B cell (primary cell): ENCODE measurements at regions of chr16 and their contacts with region 1.

Region 1: DNA sequence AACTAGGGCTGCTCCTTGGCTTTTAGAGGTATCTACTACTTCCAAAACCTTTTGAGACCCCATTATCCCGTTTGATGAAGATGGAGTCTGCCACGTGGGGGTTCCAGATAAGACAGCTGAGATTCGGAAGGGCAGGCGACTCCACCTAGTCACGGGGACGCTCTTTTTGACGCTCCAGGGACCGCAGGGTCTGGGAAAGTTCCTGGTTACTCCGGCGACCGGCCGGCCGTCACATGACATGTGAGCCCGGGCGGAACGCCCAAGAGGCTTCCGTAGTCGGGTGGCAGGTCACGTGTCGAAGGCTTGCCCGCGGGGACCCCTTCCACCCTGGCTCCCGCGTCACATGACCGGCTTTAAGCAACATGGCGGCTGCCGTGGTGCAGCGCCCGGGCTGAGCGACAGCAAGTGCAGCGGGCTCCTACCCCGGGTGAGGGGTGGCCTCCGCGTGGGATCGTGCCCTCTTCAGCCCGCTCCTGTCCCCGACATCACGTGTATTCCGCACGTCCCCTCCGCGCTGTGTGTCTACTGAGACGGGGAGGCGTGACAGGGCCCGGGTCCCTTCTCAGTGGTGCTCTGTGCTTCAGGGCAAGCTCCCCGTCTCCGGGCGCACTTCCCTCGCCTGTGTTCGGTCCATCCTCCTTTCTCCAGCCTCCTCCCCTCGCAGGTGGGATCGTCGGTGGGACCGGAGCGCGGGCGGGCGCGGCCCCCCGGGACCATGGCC is at the start of gene SPNS1:
- DNase-seq: peak; percentile 96
- ATAC-seq: peak; percentile 89
- H3K4me3 ChIP-seq: peak within 1 kb of the TSS; percentile 75 to 95 (median 83)
- H3K4me3 Mint-ChIP-seq: peak within 1 kb of the TSS; percentile 96
- H3K27ac ChIP-seq: peak within 1 kb of the TSS; percentile 65 to 90
- H3K27ac Mint-ChIP-seq: peak within 1 kb of the TSS; percentile 95
- H3K4me1 ChIP-seq: peaks cover 13 to 17% of the 10 kb centered on the region in 2 donors
- H3K4me1 Mint-ChIP-seq: peaks cover 30% of the 10 kb centered on the region
- H3K27me3 ChIP-seq: no peaks in the 10 kb centered on the region
- H3K27me3 Mint-ChIP-seq: no peaks in the 10 kb centered on the region
- CTCF ChIP-seq: no peak
- total RNA-seq, gene SPNS1: 36.4 and 37.8 TPM in 2 replicates

Region 2: DNA sequence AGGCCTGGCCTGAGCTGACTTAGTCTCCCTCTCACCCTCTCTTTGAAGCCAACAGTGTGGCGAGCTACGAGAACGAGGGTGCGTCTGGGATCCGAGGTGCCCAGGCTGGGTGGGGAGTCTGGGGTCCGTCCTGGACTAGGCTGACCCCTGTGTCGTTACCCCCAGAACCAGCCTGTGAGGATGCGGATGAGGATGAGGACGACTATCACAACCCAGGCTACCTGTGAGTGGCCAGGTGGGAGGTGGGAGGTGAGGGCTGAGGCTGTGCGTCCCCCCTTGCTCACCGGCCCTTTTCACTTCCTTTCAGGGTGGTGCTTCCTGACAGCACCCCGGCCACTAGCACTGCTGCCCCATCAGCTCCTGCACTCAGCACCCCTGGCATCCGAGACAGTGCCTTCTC is 11.9 kb after region 1 on chr16:
- CTCF ChIA-PET with region 1: interaction called, 15 read pairs
- POLR2A ChIA-PET with region 1: no interaction called
- intact Hi-C with region 1: no loop called
- DNase-seq: no peak
- ATAC-seq: no peak
- H3K4me3 ChIP-seq: no peak overlapping the region
- H3K4me3 Mint-ChIP-seq: no peak overlapping the region
- H3K27ac ChIP-seq: no peak overlapping the region
- H3K27ac Mint-ChIP-seq: no peak overlapping the region
- H3K4me1 ChIP-seq: peaks cover 16 to 22% of the 10 kb centered on the region in 2 donors
- H3K4me1 Mint-ChIP-seq: peaks cover 13% of the 10 kb centered on the region
- H3K27me3 ChIP-seq: peaks cover 0 to 13% (median 0%) of the 10 kb centered on the region in 4 experiments
- H3K27me3 Mint-ChIP-seq: peaks cover 3% of the 10 kb centered on the region
- CTCF ChIP-seq: no peak

Region 3: DNA sequence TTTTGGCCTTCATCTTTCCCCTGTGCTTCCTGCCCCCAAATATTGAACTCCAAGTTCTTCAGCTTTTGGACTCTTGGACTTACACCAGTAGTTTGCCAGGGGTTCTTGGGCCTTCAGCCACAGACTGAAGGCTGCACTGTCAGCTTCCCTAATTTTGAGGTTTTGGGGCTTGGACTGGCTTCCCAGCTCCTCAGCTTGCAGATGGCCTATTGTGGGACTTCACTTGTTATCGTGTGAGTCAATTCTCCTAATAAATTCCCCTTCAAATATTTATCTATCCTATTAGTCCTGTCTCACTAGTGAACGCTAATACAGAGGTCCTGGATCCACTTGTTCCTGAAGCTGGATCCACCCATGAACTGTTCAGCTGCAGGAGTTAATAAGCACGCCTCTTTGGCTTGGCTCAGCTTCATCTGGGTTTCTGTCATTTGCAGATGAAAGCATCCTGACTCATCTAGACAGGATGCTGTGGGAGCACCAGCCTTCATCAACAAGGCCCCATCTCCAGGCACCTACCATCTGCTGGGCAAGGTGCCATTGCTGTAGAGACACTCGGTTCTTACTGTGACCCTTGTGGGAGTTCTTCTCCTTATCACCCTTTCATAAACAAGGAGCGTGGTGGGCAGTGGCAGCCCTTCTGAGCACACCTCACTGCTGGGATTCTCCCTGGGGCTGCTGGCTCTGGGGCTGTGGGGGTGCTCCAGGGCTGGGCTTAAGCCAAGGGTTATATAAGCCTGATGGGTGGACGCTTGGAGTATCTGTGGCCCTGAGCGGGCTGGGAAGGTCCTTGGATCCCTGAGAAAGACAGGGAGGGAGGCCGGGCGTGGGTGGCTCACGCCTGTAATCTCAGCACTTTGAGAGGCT is 33.4 kb after region 1 on chr16:
- CTCF ChIA-PET with region 1: no interaction called
- POLR2A ChIA-PET with region 1: no interaction called
- intact Hi-C with region 1: no loop called
- DNase-seq: no peak
- ATAC-seq: no peak
- H3K4me3 ChIP-seq: no peak overlapping the region
- H3K4me3 Mint-ChIP-seq: no peak overlapping the region
- H3K27ac ChIP-seq: no peak overlapping the region
- H3K27ac Mint-ChIP-seq: no peak overlapping the region
- H3K4me1 ChIP-seq: no peaks in the 10 kb centered on the region
- H3K4me1 Mint-ChIP-seq: peaks cover 2% of the 10 kb centered on the region
- H3K27me3 ChIP-seq: no peaks in the 10 kb centered on the region
- H3K27me3 Mint-ChIP-seq: peaks cover 19% of the 10 kb centered on the region
- CTCF ChIP-seq: no peak